Tibial artery (tissue), 4 donors: ENCODE measurements at regions of chr10 and their contacts with region 1.

Region 1: GRCh38 chr10:109650198-109650597 is 273.1 kb downstream of the XPNPEP1 start:
- DNase-seq: no peak
- H3K4me3 ChIP-seq: no peak overlapping the region
- H3K27ac ChIP-seq: no peak overlapping the region
- H3K4me1 ChIP-seq: no peaks in the 10 kb centered on the region
- H3K27me3 ChIP-seq: no peaks in the 10 kb centered on the region
- CTCF ChIP-seq: no peak

Region 2: DNA sequence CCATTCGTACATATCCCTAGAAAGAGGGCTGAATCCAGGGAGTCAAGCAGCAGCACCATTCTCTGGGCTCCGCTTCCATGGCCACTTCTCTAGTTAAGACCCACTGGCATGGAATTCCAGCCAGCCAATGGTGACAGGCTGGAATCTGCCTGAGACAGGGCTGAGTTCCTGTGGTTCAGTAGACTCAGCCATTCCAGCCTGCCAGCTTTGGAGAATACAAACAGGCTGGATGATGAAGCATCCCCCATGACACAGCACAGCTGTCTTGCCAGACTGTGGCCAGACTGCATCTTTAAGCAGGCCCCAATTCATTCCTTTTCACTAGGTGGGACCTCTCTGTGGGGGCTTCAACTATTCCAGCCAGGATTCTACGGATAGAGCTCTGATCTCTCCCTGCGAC is 56.5 kb before region 1 on chr10:
- intact Hi-C with region 1: no loop called
- DNase-seq: no peak
- H3K4me3 ChIP-seq: no peak overlapping the region
- H3K27ac ChIP-seq: no peak overlapping the region
- H3K4me1 ChIP-seq: no peaks in the 10 kb centered on the region
- H3K27me3 ChIP-seq: no peaks in the 10 kb centered on the region
- CTCF ChIP-seq: no peak

Region 3: DNA sequence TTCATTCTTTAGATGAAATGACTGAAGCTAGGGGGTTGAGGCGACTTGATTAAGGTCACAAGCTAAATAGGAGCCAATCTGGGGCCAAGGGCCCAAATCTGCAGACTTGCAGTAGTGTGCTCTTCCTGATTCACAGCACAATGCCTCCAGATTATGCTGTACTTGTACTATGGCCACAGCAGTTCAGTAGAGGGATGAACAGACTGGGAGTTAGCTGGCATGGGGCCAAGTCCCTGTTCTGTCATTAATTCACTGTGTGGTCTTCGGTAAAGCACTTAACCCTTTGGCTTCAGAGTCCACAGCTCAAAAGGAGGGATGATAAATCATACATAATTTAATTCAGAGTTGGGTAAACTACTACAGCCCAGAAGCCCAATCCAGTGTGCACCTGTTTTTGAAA is 76.3 kb after region 1 on chr10:
- intact Hi-C with region 1: loop called (anchors 2 kb)
- DNase-seq: no peak
- H3K4me3 ChIP-seq: no peak overlapping the region
- H3K27ac ChIP-seq: no peak overlapping the region
- H3K4me1 ChIP-seq: no peaks in the 10 kb centered on the region
- H3K27me3 ChIP-seq: no peaks in the 10 kb centered on the region
- CTCF ChIP-seq: no peak